Transverse colon (tissue), 4 donors: ENCODE measurements at regions of chr4 and their contacts with region 1.

Region 1: DNA sequence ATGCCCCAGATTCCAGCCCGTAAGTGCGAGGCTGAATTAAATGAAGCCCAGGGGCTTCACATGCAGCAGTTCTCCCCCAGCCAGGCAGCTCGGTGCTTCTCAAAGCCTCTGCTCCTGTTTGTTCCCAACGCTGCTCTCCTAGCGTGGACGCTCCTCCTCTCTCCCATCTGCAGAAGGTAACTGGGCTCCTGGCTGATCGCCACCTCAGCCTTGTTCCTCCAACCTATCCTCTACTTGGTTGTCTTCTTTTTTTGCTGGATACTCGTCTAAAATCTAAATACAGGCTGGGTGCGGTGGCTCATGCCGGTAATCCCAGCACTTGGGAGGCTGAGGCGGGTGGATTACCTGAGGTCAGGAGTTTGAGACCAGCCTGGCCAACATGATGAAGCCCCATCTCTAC is 70.3 kb downstream of the NSUN7 start:
- DNase-seq: no peak
- H3K4me3 ChIP-seq: no peak overlapping the region
- H3K27ac ChIP-seq: no peak overlapping the region
- H3K4me1 ChIP-seq: no peaks in the 10 kb centered on the region
- H3K27me3 ChIP-seq: no peaks in the 10 kb centered on the region
- CTCF ChIP-seq: no peak
- EP300 ChIP-seq: no peak
- POLR2A ChIP-seq: no peak

Region 2: GRCh38 chr4:40662962-40663604 is 157.0 kb before region 1 on chr4:
- in situ Hi-C with region 1: no loop called
- intact Hi-C with region 1: no loop called
- DNase-seq: no peak
- H3K4me3 ChIP-seq: no peak overlapping the region
- H3K27ac ChIP-seq: no peak overlapping the region
- H3K4me1 ChIP-seq: peaks cover 0 to 6% (median 2%) of the 10 kb centered on the region in 4 donors
- H3K27me3 ChIP-seq: no peaks in the 10 kb centered on the region
- CTCF ChIP-seq: no peak
- EP300 ChIP-seq: no peak
- POLR2A ChIP-seq: no peak

Region 3: GRCh38 chr4:40800064-40800463 is 20.0 kb before region 1 on chr4:
- in situ Hi-C with region 1: no loop called
- intact Hi-C with region 1: loop called (anchors 1 kb)
- DNase-seq: no peak
- H3K4me3 ChIP-seq: no peak overlapping the region
- H3K27ac ChIP-seq: no peak overlapping the region
- H3K4me1 ChIP-seq: no peaks in the 10 kb centered on the region
- H3K27me3 ChIP-seq: no peaks in the 10 kb centered on the region
- CTCF ChIP-seq: no peak
- EP300 ChIP-seq: no peak
- POLR2A ChIP-seq: no peak